ENCODE measurements at regions of chr22 and their contacts with region 1.

Region 1: DNA sequence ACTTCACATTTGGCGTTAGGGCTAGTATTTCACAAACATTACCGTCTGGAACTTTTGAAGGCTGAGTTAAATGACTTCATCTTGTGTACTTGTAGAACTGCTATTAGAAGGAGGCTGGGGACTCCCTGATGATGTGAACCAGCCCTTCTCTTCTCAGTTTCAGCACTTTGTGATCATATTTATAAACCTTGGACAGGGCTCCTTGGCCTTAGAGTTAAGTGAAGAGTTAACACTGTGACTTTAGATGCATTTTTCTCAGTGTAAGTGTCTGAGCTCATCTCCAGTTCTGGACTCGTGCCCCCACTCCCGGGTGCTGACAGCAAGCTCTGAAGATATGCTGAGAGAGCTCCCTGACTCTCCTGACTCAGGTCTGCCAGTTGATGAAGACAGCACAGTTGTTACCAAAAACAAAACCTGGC is 8.4 kb downstream of the MIAT start:
- DNase-seq: no peak
- ATAC-seq: no peak
- H3K4me3 Mint-ChIP-seq: peak overlapping the region; percentile 55
- H3K27ac Mint-ChIP-seq: peak overlapping the region; percentile 46
- H3K4me1 Mint-ChIP-seq: peaks cover 71% of the 10 kb centered on the region
- H3K27me3 Mint-ChIP-seq: no peaks in the 10 kb centered on the region
- CTCF ChIP-seq: no peak

Region 2: DNA sequence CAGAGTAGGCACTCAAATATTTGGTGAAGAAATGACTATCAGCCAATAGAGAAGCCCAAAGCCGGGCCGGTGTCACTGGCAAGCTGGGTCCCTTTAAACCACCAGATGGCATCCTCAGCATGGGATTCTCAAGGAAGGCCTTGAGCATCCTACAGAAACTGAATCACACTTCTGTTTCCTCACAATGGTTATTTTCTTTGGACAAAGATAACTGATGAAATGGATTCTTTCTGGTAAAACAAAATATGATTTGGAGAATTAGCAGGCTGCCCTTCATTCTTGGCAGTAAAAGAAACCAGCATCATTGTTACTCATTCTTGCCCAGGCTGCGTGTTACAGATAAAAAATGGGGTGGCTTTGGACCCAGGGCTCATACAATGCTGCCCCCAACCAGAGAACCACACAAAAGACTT is 267.1 kb before region 1 on chr22:
- CTCF ChIA-PET with region 1: interaction called, 4 read pairs
- POLR2A ChIA-PET with region 1: no interaction called
- intact Hi-C with region 1: loop called (anchors 1 kb)
- DNase-seq: peak; percentile 21
- ATAC-seq: peak; percentile 77
- H3K4me3 Mint-ChIP-seq: no peak overlapping the region
- H3K27ac Mint-ChIP-seq: no peak overlapping the region
- H3K4me1 Mint-ChIP-seq: peaks cover 5% of the 10 kb centered on the region
- H3K27me3 Mint-ChIP-seq: peaks cover 11% of the 10 kb centered on the region
- CTCF ChIP-seq: peak; percentile 47

Region 3: DNA sequence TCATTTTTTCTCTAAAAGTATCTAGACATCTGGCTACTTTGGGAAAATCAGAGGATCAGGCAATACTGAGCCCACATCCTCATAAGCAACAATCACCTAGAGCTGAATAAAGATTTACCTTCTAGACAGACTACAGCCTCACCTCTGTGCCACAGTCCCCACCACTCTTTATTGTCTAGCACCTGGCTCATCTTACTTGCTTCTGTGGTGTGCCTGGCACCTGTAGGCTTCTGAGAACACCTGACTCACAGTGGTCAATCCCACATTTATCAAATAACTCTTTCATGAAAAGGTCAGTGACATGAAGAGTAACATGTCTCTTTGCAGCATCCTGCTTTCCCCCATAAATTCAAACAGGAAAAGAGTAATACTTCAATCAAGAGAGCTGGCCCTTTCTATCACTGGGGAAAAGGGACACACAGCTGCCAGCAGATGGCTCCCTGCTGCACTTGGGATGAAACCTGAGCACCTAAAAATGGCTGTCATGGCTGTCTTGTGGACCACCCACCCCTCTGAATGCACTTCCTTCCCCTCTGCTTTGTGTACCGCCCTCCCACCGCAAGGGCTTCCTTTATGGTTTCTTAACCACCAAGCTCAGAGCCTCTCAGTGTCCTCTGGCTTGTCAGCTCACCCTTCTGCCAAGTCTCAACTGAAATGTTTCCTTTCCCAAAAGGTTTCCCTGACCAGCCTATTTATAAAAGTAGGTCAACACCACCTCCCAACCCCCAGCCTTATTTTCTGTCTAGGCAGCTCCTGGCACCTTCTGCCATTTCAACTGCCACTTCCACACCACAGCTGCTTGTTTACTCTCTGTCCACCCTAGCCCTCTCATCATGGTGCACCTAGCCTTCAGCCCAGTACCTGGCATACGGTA is 162.9 kb before region 1 on chr22:
- CTCF ChIA-PET with region 1: interaction called, 15 read pairs
- POLR2A ChIA-PET with region 1: no interaction called
- intact Hi-C with region 1: no loop called
- DNase-seq: no peak
- ATAC-seq: peak; percentile 86
- H3K4me3 Mint-ChIP-seq: peak overlapping the region; percentile 33
- H3K27ac Mint-ChIP-seq: peak overlapping the region; percentile 78
- H3K4me1 Mint-ChIP-seq: peaks cover 17% of the 10 kb centered on the region
- H3K27me3 Mint-ChIP-seq: no peaks in the 10 kb centered on the region
- CTCF ChIP-seq: no peak

Region 4: DNA sequence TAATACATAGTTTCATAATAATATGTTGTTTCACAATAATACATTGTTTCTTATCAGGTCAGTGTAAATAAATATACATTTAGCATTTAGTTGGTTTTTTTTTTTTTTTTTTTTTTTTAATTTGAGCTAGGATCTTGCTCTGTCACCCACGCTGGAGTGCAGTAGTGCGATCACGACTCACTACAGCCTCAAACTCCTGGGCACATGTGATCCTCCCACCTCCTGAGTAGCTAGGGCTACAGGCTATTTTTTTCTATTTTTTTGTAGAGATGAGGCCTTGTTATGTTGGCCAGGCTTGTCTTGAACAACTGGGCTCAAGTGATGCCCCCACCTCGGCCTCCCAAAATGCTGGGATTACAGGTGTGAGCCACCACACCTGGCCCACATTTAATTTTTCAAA is 35.1 kb after region 1 on chr22:
- CTCF ChIA-PET with region 1: no interaction called
- POLR2A ChIA-PET with region 1: no interaction called
- intact Hi-C with region 1: no loop called
- DNase-seq: no peak
- ATAC-seq: no peak
- H3K4me3 Mint-ChIP-seq: no peak overlapping the region
- H3K27ac Mint-ChIP-seq: no peak overlapping the region
- H3K4me1 Mint-ChIP-seq: peaks cover 20% of the 10 kb centered on the region
- H3K27me3 Mint-ChIP-seq: no peaks in the 10 kb centered on the region
- CTCF ChIP-seq: no peak

Region 5: GRCh38 chr22:26797910-26798309 is 132.1 kb after region 1 on chr22:
- CTCF ChIA-PET with region 1: no interaction called
- POLR2A ChIA-PET with region 1: no interaction called
- intact Hi-C with region 1: no loop called
- DNase-seq: no peak
- ATAC-seq: no peak
- H3K4me3 Mint-ChIP-seq: no peak overlapping the region
- H3K27ac Mint-ChIP-seq: no peak overlapping the region
- H3K4me1 Mint-ChIP-seq: no peaks in the 10 kb centered on the region
- H3K27me3 Mint-ChIP-seq: no peaks in the 10 kb centered on the region
- CTCF ChIP-seq: no peak